Caco-2 (cell line): ENCODE measurements at regions of chr3 and their contacts with region 1.

Region 1: DNA sequence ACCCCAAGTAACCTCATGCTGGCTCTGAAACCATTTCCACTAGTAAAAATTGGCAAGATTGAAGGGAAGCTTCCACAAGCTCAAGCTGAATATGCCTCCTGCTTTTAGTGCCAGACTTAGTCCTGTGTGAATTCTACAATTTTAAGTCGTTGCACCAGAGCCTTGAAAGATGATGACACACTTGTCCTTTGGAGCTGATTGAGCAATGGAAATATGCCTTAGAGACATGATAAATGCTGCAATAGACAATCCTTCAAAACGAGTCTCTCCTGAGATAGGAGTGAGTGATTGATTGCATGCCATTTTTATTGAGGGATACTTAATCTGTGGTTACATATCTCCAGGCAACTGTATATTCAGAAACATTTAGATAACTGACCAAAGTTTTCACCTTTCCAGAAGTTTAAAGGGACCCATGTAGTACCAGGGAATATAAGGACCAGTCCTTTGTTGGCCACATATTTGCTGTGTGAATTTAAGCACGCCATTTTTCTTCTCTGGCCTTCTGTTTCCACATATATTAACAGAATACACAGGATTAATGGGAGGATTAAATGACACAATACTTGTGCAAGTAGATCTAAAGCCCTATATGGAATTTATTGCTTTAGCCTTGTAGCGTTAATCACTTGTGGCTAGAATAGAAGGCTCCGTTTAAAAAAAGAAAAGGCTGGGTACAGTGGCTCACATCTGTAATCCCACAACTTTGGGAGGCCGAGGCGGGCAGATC is 65.1 kb downstream of the PPARG start:
- DNase-seq: peak; percentile 36 to 70
- H3K4me3 ChIP-seq: no peak overlapping the region
- H3K4me3 Mint-ChIP-seq: no peak overlapping the region
- H3K27ac Mint-ChIP-seq: no peak overlapping the region
- H3K4me1 ChIP-seq: peaks cover 48% of the 10 kb centered on the region
- H3K4me1 Mint-ChIP-seq: peaks cover 20% of the 10 kb centered on the region
- H3K27me3 ChIP-seq: no peaks in the 10 kb centered on the region
- H3K27me3 Mint-ChIP-seq: no peaks in the 10 kb centered on the region
- CTCF ChIP-seq: no peak

Region 2: DNA sequence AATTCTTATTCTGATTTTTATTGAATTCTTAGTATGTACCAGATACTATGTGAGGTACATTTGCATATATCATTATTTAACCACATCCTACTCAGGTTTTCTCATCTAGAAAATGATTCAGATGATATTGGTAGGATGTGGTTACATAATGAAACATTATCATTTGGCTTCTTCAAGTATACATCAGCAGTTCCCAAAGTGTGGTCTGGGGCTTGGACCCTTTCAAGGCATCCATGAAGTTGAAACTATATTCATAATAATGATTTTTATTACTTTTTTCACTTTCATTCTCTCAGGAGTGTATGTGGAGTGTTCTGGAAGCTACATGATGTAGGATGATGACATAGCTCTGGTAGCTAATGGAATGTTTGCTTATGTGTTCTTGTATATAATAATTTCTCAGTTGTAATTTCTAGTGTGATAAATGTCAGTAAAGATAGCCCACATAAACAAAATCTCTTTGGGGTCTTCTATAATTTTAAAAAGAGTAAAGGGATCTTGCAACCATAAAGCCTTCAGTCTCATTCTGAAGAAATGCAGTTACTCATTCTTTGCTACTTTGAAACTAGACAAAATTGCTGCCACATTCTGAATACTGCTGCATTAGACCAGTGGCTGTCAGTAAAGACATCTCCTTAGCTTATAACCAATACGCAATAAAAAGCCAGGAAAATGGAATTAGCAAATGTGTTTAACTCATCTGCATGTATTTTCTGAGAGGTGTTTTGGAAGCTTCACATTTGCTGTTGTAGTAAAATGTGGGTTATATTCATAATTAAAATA is 30.7 kb after region 1 on chr3:
- CTCF ChIA-PET with region 1: no interaction called
- POLR2A ChIA-PET with region 1: no interaction called
- intact Hi-C with region 1: loop called (anchors 1 kb)
- DNase-seq: no peak
- H3K4me3 ChIP-seq: no peak overlapping the region
- H3K4me3 Mint-ChIP-seq: no peak overlapping the region
- H3K27ac Mint-ChIP-seq: no peak overlapping the region
- H3K4me1 ChIP-seq: peaks cover 21% of the 10 kb centered on the region
- H3K4me1 Mint-ChIP-seq: no peaks in the 10 kb centered on the region
- H3K27me3 ChIP-seq: no peaks in the 10 kb centered on the region
- H3K27me3 Mint-ChIP-seq: no peaks in the 10 kb centered on the region
- CTCF ChIP-seq: no peak

Region 3: DNA sequence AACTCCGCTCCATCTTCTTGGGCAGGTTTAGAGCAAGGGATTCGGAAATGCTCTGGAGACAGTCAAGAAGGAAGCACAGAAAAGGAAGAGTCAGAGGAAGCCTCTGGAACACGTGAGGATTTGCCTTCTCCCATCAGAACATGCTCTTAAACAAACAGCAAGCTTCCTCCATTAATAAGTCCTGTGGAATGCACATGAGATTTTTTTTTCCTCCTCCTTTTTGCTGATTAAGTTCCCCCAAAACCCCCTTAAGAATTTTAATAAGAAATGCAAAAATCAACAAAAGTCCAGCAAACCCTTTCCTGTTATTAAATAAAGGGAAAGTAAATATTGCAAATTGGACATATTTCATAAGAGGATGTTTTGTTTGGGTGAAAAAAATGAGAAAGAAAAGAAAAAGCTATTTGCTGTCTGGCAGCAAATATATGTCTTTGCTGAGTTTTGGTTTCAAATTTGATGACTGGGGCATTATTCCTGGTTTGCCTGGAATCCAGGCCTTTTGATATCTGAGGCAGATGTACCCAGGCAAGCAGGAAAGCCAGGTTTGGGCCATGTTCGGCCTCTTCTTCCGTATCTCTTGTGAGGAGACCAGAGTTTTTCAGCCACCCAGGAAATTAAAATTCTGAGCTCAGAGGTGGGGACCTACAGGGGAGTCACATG is 122.4 kb after region 1 on chr3:
- CTCF ChIA-PET with region 1: no interaction called
- POLR2A ChIA-PET with region 1: no interaction called
- intact Hi-C with region 1: loop called (anchors 2 kb)
- DNase-seq: no peak
- H3K4me3 ChIP-seq: no peak overlapping the region
- H3K4me3 Mint-ChIP-seq: no peak overlapping the region
- H3K27ac Mint-ChIP-seq: no peak overlapping the region
- H3K4me1 ChIP-seq: peaks cover 19% of the 10 kb centered on the region
- H3K4me1 Mint-ChIP-seq: peaks cover 10% of the 10 kb centered on the region
- H3K27me3 ChIP-seq: no peaks in the 10 kb centered on the region
- H3K27me3 Mint-ChIP-seq: no peaks in the 10 kb centered on the region
- CTCF ChIP-seq: no peak